HCT116 (cell line): ENCODE measurements at regions of chr3 and their contacts with region 1.

Region 1: DNA sequence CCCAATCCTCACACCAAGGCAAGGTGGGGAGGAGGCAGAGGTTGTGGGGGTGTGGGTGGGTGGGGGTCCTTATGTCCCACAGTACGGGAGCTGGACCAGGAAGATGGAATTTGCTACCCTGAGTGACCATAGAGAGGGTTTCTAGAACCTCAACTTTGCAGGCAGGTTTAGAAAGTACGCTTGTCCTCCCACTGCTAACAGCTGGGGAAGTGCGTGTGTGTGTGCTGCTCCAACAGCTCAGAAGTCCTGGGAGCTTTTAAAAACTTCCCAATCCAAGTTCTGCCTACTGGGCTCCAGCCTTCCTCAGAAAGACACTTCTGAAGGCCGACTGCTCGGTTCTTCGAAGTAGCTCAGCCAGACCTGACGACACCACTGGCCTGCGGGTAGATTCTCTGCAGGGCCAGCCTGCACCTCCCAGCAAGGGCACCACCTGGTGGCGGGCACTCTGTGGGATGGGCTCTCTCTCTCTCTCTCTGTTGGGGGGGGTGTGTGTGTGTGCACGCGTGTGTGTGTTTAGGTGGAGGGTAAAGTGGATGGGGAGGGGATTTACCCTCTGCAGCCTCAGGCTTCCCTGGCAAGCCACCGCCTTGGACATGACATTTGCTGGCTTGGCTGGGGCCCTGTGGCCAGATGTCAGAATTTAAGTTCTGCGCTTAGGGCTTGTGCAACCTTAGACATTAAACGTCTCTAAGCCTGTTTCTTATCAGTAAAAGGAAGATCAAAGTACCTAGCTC is 15.6 kb downstream of the TMEM158 start:
- DNase-seq: peak; percentile 70
- ATAC-seq: peak; percentile 98
- H3K4me3 ChIP-seq: no peak overlapping the region
- H3K27ac ChIP-seq: no peak overlapping the region
- H3K4me1 ChIP-seq: peaks cover 5 to 32% of the 10 kb centered on the region in 2 experiments; a peak in 3 of 4 replicates
- H3K27me3 ChIP-seq: no peaks in the 10 kb centered on the region
- CTCF ChIP-seq: peak; percentile 83 to 86 (median 86)
- POLR2A ChIP-seq: no peak
- RAD21 ChIP-seq: peak; percentile 92

Region 2: DNA sequence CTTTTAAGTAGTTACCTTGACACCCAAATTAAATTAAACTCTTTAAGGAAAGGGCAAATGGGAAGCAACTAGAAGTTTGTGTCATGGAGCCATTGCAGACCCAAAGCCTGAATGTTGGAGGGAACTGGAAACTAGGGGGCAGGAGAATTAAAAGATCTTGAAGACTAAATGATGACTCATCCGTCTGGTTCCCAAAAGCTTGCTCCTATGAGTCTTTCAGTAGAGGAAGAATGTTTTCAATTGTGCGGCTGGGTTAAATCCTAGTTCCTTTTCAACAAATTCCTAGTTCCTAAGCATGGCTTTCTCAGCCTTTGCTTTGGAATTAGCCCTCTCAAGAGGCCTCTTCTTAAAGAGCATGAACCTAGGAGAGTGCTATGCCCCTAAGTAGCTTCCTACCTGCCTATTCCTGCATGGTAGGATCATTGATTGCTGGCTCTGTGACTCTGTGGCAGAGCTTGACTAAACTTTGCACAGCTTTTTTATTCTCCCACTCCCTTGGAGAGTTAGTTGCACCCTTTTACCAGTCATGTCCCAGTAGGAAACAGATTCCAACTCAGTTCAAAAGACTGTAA is 166.7 kb before region 1 on chr3:
- CTCF ChIA-PET with region 1: interaction called, 94 read pairs
- POLR2A ChIA-PET with region 1: interaction called, 6 read pairs
- RAD21 ChIA-PET with region 1: interaction called, 6 to 7 read pairs
- intact Hi-C with region 1: loop called (anchors 1 kb)
- DNase-seq: no peak
- ATAC-seq: peak; percentile 26; the same call in 1 of the 2 replicates
- H3K4me3 ChIP-seq: no peak overlapping the region
- H3K27ac ChIP-seq: no peak overlapping the region
- H3K4me1 ChIP-seq: peaks cover 8 to 20% of the 10 kb centered on the region in 2 experiments; a peak in 3 of 4 replicates
- H3K27me3 ChIP-seq: no peaks in the 10 kb centered on the region
- CTCF ChIP-seq: 0 out of 6 replicates have a peak, but pooled peaks of 1 of the 3 experiments have one; percentile 38
- POLR2A ChIP-seq: no peak
- RAD21 ChIP-seq: peak; percentile 66

Region 3: DNA sequence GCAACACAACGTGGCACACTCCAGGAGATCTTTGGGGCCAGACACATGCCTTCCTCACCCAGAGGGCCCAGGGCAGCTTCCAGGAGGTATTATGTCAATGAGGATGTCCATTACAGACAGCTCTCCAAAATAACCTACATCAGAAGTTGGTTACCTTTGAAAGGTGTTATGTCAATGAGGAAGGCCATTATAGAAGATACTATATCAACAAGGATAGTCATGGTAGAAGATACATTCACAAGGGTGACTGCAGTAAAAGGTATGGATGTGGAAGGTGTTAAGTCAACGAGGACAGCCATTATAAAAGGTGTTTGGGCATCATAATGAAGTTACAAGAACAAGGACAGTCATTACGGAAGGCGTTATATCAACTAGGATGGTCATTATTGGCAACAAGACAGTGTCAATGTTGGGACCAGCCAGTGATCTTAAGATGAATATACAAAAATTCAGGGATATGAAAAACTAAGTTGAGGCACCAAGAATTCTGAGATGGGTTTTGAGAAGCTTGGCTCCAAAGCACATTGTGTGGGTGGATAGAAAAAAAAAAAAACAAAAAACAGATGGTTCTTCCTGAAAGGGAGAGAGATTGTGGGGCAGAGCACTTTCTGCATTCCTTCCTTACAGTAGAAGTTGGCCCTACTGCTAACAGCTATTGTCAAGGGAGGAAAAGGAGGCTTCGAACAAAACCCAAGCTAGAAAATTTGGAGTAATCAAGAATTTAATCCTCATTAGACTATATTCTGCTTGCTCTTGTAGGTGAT is 75.5 kb before region 1 on chr3:
- CTCF ChIA-PET with region 1: interaction called, 17 read pairs
- POLR2A ChIA-PET with region 1: interaction called, 6 read pairs
- RAD21 ChIA-PET with region 1: interaction called in 1 of 2 experiments, 3 read pairs
- intact Hi-C with region 1: loop called (anchors 2 kb)
- DNase-seq: no peak
- ATAC-seq: no peak
- H3K4me3 ChIP-seq: 0 out of 4 replicates have a peak overlapping the region, but pooled peaks of 1 of the 2 experiments have one; percentile 2
- H3K27ac ChIP-seq: peak overlapping the region; percentile 92
- H3K4me1 ChIP-seq: peaks cover 89 to 100% of the 10 kb centered on the region in 2 experiments
- H3K27me3 ChIP-seq: no peaks in the 10 kb centered on the region
- CTCF ChIP-seq: no peak
- POLR2A ChIP-seq: no peak
- RAD21 ChIP-seq: no peak

Region 4: GRCh38 chr3:45140141-45140784 is 70.2 kb before region 1 on chr3:
- CTCF ChIA-PET with region 1: interaction called, 17 read pairs
- POLR2A ChIA-PET with region 1: interaction called, 5 read pairs
- RAD21 ChIA-PET with region 1: no interaction called
- intact Hi-C with region 1: no loop called
- DNase-seq: no peak
- ATAC-seq: no peak
- H3K4me3 ChIP-seq: no peak overlapping the region
- H3K27ac ChIP-seq: peak overlapping the region; percentile 69
- H3K4me1 ChIP-seq: peaks cover 82 to 95% of the 10 kb centered on the region in 2 experiments
- H3K27me3 ChIP-seq: no peaks in the 10 kb centered on the region
- CTCF ChIP-seq: no peak
- POLR2A ChIP-seq: no peak
- RAD21 ChIP-seq: no peak

Region 5: DNA sequence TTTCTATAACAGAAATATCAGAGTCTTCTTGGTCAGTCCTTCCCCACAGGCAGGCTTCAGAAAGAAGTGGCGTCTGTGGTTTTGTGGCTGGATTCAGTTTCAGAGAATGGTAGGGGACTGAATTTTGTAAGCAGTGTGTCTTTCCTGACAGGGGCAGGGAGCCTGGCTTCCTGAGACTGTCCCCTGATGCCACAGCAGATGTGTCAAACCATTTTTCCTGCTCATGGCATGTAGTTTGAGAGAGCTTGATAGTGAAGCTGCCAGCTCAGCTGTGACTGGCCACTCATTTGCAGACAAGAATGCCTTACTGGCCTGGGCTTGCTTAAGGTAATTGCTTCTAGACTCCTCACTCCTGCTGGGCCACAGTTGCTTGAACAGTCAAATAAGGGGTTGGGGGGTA is 204.3 kb after region 1 on chr3:
- CTCF ChIA-PET with region 1: no interaction called
- POLR2A ChIA-PET with region 1: no interaction called
- RAD21 ChIA-PET with region 1: no interaction called
- intact Hi-C with region 1: no loop called
- DNase-seq: no peak
- ATAC-seq: no peak
- H3K4me3 ChIP-seq: no peak overlapping the region
- H3K27ac ChIP-seq: no peak overlapping the region
- H3K4me1 ChIP-seq: no peaks in the 10 kb centered on the region
- H3K27me3 ChIP-seq: no peaks in the 10 kb centered on the region
- CTCF ChIP-seq: no peak
- POLR2A ChIP-seq: no peak
- RAD21 ChIP-seq: no peak